H1 (cell line): ENCODE measurements at regions of chr6 and their contacts with region 1.

Region 1: DNA sequence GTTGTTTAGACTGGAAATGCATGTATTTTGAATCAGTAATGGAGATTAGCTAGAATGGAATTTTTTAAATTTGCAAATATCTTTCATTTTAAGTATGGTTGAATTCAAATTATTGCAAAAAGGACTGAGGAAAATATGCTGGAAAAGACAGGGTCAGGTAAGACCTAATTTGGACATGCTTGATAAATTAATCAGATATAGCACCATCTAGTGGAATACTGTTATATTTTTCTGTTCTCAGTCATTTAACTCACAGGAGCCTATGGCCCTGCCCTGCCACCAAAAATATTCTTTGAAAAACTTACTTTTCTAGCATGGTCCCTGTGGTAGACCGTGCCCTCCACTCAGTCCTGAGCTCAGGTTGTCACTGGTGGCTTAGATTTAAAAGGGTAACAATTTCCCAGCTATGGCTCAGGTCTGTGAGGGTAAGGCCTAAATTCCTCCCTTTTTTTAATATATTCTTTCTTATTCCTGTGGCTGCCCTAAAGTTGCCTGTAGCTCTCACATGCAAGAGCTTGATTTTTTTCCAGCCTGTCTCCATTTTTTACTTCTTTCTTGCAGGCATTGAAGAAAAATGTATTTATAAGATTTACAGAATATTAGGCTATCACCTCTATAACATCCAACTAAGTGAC is 25.3 kb upstream of the KIAA1586 start:
- DNase-seq: no peak
- H3K4me3 ChIP-seq: no peak overlapping the region
- H3K27ac ChIP-seq: no peak overlapping the region
- H3K4me1 ChIP-seq: peaks cover 4 to 13% (median 11%) of the 10 kb centered on the region in 4 experiments; a peak in 6 of 7 replicates
- H3K27me3 ChIP-seq: no peaks in the 10 kb centered on the region; a peak in 1 of 7 replicates
- CTCF ChIP-seq: peak in 2 of 3 experiments; percentile 8 to 48; a peak in 2 of 4 replicates
- EP300 ChIP-seq: no peak
- POLR2A ChIP-seq: no peak
- RAD21 ChIP-seq: peak; percentile 28 to 34; a peak in 3 of 4 replicates

Region 2: DNA sequence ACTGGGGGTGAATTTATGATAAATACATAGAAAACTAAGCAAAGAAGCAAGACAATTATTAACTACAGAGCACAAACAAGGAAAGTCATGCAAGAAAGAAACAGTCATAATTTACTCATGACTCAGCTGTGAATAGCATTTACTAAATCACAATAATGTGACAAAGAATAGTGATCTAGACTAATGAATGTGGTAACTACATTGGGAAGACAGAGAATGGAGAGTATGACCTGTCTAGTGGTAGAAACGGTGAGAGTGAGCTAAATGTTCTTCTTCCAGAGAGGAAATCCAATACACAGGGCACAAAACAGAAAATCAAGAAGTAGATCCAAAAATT is 225.0 kb before region 1 on chr6:
- CTCF ChIA-PET with region 1: no interaction called
- POLR2A ChIA-PET with region 1: no interaction called
- DNase-seq: no peak
- H3K4me3 ChIP-seq: no peak overlapping the region
- H3K27ac ChIP-seq: no peak overlapping the region
- H3K4me1 ChIP-seq: peaks cover 4 to 28% (median 14%) of the 10 kb centered on the region in 4 experiments; a peak in 6 of 7 replicates
- H3K27me3 ChIP-seq: no peaks in the 10 kb centered on the region
- CTCF ChIP-seq: no peak
- EP300 ChIP-seq: no peak
- POLR2A ChIP-seq: no peak
- RAD21 ChIP-seq: no peak

Region 3: GRCh38 chr6:56944661-56945060 is 76.5 kb before region 1 on chr6:
- CTCF ChIA-PET with region 1: no interaction called
- POLR2A ChIA-PET with region 1: no interaction called
- DNase-seq: no peak
- H3K4me3 ChIP-seq: no peak overlapping the region
- H3K27ac ChIP-seq: no peak overlapping the region
- H3K4me1 ChIP-seq: no peaks in the 10 kb centered on the region
- H3K27me3 ChIP-seq: no peaks in the 10 kb centered on the region
- CTCF ChIP-seq: no peak
- EP300 ChIP-seq: no peak
- POLR2A ChIP-seq: no peak
- RAD21 ChIP-seq: no peak

Region 4: GRCh38 chr6:56961157-56961556 is 60.0 kb before region 1 on chr6:
- CTCF ChIA-PET with region 1: interaction called, 12 read pairs
- POLR2A ChIA-PET with region 1: no interaction called
- DNase-seq: no peak
- H3K4me3 ChIP-seq: no peak overlapping the region
- H3K27ac ChIP-seq: no peak overlapping the region
- H3K4me1 ChIP-seq: peaks cover 0 to 4% (median 3%) of the 10 kb centered on the region in 4 experiments; a peak in 3 of 7 replicates
- H3K27me3 ChIP-seq: no peaks in the 10 kb centered on the region
- CTCF ChIP-seq: peak in 1 of 3 experiments; percentile 2; a peak in 1 of 4 replicates
- EP300 ChIP-seq: no peak
- POLR2A ChIP-seq: no peak
- RAD21 ChIP-seq: peak; percentile 16 to 43; a peak in 3 of 4 replicates

Region 5: DNA sequence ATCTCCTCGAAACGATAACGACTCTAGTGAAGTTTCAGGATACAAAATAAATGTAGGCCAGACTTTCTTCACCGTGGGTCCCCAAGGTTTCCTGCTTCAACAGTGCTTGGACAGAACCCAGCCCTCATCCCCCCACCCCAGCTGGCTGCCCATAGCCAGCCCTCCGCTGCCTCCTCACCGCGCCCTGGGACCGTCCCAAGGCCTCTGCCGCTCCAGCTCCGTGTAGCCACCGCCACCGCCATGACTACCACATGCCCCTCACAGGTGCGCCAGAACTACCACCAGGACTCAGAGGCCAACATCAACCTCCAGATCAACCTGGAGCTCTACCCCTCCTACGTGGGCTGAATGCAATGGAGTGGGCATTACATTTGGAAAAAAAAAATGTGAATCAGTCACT is 16.9 kb before region 1 on chr6:
- CTCF ChIA-PET with region 1: interaction called, 21 read pairs
- POLR2A ChIA-PET with region 1: interaction called, 3 read pairs
- DNase-seq: no peak
- H3K4me3 ChIP-seq: no peak overlapping the region
- H3K27ac ChIP-seq: no peak overlapping the region
- H3K4me1 ChIP-seq: no peaks in the 10 kb centered on the region
- H3K27me3 ChIP-seq: no peaks in the 10 kb centered on the region
- CTCF ChIP-seq: no peak
- EP300 ChIP-seq: no peak
- POLR2A ChIP-seq: no peak
- RAD21 ChIP-seq: no peak

Region 6: GRCh38 chr6:57064809-57065208 is 43.6 kb after region 1 on chr6:
- CTCF ChIA-PET with region 1: no interaction called
- POLR2A ChIA-PET with region 1: no interaction called
- DNase-seq: no peak
- H3K4me3 ChIP-seq: no peak overlapping the region
- H3K27ac ChIP-seq: no peak overlapping the region
- H3K4me1 ChIP-seq: peaks cover 0 to 6% (median under 1%) of the 10 kb centered on the region in 4 experiments; a peak in 2 of 7 replicates
- H3K27me3 ChIP-seq: no peaks in the 10 kb centered on the region
- CTCF ChIP-seq: no peak
- EP300 ChIP-seq: no peak
- POLR2A ChIP-seq: no peak
- RAD21 ChIP-seq: no peak